ENCODE measurements at regions of chr1 and their contacts with region 1.

Region 1: DNA sequence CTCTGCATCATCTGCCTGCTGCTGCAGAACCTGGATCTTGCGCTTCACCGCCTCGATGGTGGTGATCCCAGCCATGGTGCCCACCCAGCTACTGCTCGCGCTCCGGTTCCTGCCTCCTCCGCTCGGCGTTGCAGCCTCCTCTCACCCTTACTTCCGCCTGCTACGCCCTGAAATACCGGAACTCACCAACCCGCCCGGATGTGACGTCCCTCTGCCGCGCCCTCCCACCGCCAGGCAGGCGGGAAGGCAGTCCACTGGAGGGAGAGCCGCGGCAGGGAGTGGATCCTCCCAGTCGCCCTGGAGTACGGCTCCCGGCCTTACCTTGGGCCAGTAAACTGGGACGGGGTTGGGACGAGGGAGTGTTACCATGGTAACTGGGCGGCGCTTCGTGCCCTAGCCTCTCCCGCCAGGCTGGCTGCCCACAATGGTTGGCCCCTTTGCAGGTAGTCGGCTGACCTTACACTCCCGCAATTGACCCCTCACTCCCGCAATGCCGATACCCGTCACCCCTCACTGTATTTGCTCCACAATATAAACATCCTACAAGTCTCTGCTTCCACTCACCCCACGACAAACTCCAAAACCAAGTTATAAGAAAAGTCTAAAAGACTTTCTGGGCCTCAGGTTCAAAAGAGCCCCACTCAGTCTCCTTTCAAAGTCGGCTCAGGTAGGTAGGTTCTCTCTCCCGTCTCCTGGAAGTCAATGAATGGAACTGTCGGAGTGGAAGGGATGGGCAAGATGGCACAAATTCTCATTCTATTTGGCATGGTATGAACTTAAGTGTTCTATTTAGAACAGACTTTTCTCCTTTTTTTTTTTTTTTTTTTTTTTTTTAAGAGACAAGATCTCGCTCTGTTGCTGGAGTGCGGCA is 8.6 kb downstream of the TPM3 start:
- DNase-seq: peak; percentile 98
- ATAC-seq: peak; percentile 72
- H3K4me3 Mint-ChIP-seq: peak overlapping the region; percentile 99
- H3K27ac Mint-ChIP-seq: peak overlapping the region; percentile 100
- H3K4me1 Mint-ChIP-seq: peaks cover 39% of the 10 kb centered on the region
- H3K27me3 Mint-ChIP-seq: no peaks in the 10 kb centered on the region

Region 2: DNA sequence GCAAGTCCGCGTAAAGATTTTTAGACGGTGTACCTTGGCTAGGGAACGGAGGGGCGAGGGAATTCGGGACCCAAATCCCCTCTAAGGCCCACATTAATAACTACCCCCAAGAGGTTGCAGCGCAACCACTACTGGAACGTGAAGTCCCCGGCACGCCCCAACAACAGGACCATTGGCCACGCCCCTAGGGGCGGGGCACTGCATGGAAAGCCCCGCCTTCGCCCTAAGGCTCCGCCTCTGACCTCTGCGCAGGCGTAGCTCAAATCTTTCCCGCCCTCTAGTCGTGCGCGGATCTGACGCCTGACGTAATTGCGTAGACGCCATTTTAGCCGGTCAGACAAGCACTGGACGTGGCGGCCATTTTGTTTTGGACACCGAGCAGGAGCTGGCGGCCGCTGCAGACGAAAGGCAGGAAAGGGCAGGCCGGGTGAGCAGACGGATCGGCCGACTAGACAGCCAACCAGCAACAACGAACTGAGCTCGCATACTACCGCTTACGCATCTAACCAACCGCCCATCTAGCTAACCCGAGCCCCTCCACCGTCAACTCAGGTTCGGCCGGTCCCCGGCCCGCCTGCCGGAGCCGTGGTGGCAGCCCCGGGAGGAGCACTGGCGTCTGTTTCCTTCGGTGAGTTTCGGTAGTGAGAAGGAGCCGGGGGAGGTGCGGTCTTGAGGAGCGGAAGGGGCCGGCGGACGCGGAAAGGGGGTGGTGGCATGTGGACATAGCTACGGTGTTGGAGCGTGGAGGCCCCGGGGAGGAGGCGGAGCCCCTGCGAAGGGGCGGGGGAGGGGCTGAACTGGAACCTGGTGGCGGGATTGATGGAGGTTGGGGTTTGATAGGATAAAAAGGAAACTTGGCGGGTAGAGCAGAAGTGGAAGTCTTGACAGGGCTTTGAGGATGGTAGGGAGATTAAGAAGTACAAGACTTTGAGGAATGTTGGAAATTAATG is 549.3 kb before region 1 on chr1 and contains the start of gene CHTOP:
- CTCF ChIA-PET with region 1: no interaction called
- POLR2A ChIA-PET with region 1: no interaction called
- intact Hi-C with region 1: loop called in 1 of 2 experiments (anchors 1 kb)
- DNase-seq: peak; percentile 98
- ATAC-seq: peak; percentile 93
- H3K4me3 Mint-ChIP-seq: peak within 1 kb of the TSS; percentile 98
- H3K27ac Mint-ChIP-seq: peak within 1 kb of the TSS; percentile 98
- H3K4me1 Mint-ChIP-seq: peaks cover 50% of the 10 kb centered on the region
- H3K27me3 Mint-ChIP-seq: no peaks in the 10 kb centered on the region
- total RNA-seq, gene CHTOP: 85.1 to 91.4 TPM

Region 3: GRCh38 chr1:154157520-154158306 is 25.6 kb before region 1 on chr1:
- CTCF ChIA-PET with region 1: interaction called, 16 read pairs
- POLR2A ChIA-PET with region 1: interaction called, 4 read pairs
- intact Hi-C with region 1: loop called (anchors 1 kb)
- DNase-seq: peak; percentile 83
- ATAC-seq: peak; percentile 98
- H3K4me3 Mint-ChIP-seq: peak overlapping the region; percentile 60
- H3K27ac Mint-ChIP-seq: peak overlapping the region; percentile 96
- H3K4me1 Mint-ChIP-seq: peaks cover 71% of the 10 kb centered on the region
- H3K27me3 Mint-ChIP-seq: no peaks in the 10 kb centered on the region

Region 4: GRCh38 chr1:154272217-154272998 is 89.1 kb after region 1 on chr1 and contains the start of gene HAX1:
- CTCF ChIA-PET with region 1: interaction called, 5 read pairs
- POLR2A ChIA-PET with region 1: no interaction called
- intact Hi-C with region 1: loop called (anchors 1 kb)
- DNase-seq: peak; percentile 99
- ATAC-seq: peak; percentile 95
- H3K4me3 Mint-ChIP-seq: peak within 1 kb of the TSS; percentile 99
- H3K27ac Mint-ChIP-seq: peak within 1 kb of the TSS; percentile 99
- H3K4me1 Mint-ChIP-seq: peaks cover 37% of the 10 kb centered on the region
- H3K27me3 Mint-ChIP-seq: no peaks in the 10 kb centered on the region
- total RNA-seq, gene HAX1: 177 to 225 TPM

Region 5: DNA sequence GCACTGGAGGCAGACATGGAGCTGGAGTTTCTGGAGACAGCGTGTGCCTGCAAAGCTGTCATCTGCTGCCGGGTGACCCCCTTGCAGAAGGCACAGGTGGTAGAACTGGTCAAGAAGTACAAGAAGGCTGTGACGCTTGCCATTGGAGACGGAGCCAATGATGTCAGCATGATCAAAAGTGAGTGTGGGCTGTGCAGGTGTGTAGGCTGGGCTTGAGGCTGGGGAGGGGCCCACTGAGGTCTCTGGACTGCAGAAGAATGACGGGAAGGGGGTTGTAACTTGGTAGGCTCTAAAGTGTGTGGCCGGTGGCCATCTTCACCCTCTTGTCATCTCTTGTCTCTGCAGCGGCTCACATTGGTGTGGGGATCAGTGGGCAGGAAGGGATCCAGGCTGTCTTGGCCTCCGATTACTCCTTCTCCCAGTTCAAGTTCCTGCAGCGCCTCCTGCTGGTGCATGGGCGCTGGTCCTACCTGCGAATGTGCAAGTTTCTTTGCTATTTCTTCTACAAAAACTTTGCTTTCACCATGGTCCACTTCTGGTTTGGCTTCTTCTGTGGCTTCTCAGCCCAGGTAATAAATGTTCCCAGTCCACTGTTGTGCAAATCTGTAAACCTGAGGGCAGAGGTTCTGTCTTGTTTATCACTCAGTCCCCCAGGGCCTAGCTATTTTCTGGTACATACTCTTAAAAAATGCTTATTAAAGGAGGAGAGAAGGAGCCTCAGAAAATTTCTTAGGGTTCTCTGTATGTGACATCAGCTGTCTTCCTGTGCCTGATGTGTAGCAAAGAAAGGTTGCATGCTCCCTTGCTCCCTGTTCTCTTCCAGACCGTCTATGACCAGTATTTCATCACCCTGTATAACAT is 161.9 kb after region 1 on chr1:
- CTCF ChIA-PET with region 1: no interaction called
- POLR2A ChIA-PET with region 1: no interaction called
- intact Hi-C with region 1: loop called in 1 of 2 experiments (anchors 1 kb)
- DNase-seq: peak; percentile 87
- ATAC-seq: peak; percentile 45
- H3K4me3 Mint-ChIP-seq: peak overlapping the region; percentile 37
- H3K27ac Mint-ChIP-seq: peak overlapping the region; percentile 80
- H3K4me1 Mint-ChIP-seq: peaks cover 70% of the 10 kb centered on the region
- H3K27me3 Mint-ChIP-seq: no peaks in the 10 kb centered on the region

Region 6: DNA sequence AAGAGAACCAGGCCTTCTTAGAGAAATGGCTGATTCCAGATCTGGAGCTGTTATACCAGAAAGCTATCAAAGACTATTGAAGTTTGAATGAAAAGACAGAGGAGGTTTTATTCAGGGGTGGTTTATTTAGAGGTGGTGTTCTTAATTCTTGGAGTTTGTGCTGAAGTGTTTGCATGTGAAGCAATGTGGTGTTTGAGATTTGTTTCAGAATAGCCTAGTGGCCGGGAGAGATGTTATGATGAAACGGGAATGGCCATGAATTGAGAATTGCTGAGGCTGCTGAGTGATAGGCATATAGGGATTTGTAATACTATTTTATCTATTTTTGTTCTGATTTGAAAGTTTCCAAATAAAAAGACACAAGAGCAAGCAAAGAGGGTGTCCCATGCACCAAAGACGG is 329.5 kb after region 1 on chr1:
- CTCF ChIA-PET with region 1: no interaction called
- POLR2A ChIA-PET with region 1: no interaction called
- intact Hi-C with region 1: no loop called
- DNase-seq: no peak
- ATAC-seq: no peak
- H3K4me3 Mint-ChIP-seq: no peak overlapping the region
- H3K27ac Mint-ChIP-seq: no peak overlapping the region
- H3K4me1 Mint-ChIP-seq: no peaks in the 10 kb centered on the region
- H3K27me3 Mint-ChIP-seq: peaks cover 13% of the 10 kb centered on the region

Region 7: GRCh38 chr1:154974063-154974807 is 791.0 kb after region 1 on chr1 and contains the start of gene CKS1B:
- CTCF ChIA-PET with region 1: no interaction called
- POLR2A ChIA-PET with region 1: no interaction called
- intact Hi-C with region 1: loop called in 1 of 2 experiments (anchors 10 kb)
- DNase-seq: peak; percentile 98
- ATAC-seq: peak; percentile 86
- H3K4me3 Mint-ChIP-seq: no peak within 1 kb of the TSS
- H3K27ac Mint-ChIP-seq: no peak within 1 kb of the TSS
- H3K4me1 Mint-ChIP-seq: peaks cover 30% of the 10 kb centered on the region
- H3K27me3 Mint-ChIP-seq: no peaks in the 10 kb centered on the region
- total RNA-seq, gene CKS1B: 190 to 196 TPM

Measured in activated CD4-positive, alpha-beta T cell treated with anti-CD3 and anti-CD28 coated beads for 36 hours (primary cell).